Posterior cingulate gyrus (tissue), 11 donors: ENCODE measurements at regions of chr5 and their contacts with region 1.

Region 1: GRCh38 chr5:32232441-32233219 is 58.5 kb upstream of the GOLPH3 start:
- DNase-seq: peak; percentile 65 to 96 (median 86)

Region 2: GRCh38 chr5:31186672-31187267 is 1045.9 kb before region 1 on chr5:
- intact Hi-C with region 1: no loop called
- DNase-seq: no peak

Region 3: DNA sequence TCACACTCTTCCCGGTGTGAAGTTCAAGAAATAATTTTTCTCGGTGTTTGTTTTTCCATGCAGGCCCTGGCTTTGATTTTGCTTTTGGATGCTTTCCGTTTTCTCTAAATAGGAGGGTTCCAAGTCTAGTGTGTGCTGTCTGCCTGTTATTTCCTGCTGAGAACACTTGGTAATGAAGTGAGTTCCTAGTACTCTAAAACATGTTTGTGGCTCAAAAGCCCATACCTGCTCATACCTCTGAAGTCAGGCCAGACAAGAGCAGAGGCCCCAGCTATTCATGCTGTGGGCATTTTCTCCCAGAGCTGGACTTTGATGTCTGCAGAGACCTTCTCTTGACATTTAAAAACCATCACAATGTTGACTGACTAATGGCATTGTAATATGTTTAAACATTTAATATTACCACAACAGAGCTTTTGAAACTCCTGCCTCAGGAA is 269.7 kb before region 1 on chr5:
- intact Hi-C with region 1: no loop called
- DNase-seq: no peak

Region 4: DNA sequence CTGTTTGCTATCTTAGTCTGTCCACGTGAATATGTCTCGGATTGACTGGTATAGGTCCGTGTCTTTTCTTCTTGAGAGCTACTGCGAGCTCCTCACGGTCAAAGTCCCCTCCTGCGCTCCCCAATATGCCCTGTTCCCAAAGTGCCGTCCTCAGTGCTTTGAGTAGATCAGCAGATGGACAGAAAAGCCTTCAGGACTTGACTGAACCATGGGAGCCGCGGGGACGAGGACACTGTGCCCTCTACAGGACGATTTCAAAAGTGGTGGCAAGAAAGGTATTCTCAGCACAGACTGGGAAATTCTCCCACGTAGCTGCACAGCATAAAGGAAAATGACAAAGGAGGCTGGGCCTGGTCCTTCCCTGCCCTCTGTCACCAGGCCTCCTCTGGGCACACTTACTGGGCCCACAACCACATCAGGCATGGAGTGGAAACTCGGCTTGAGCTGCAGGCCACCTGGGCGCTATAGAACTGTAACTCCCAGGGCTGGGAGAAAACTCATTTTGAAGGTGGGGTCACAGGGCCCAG is 96.7 kb after region 1 on chr5:
- intact Hi-C with region 1: loop called (anchors 1 kb)
- DNase-seq: peak; percentile 32 to 95 (median 64)

Region 5: GRCh38 chr5:32406650-32407049 is 174.0 kb after region 1 on chr5:
- intact Hi-C with region 1: no loop called
- DNase-seq: no peak

Region 6: DNA sequence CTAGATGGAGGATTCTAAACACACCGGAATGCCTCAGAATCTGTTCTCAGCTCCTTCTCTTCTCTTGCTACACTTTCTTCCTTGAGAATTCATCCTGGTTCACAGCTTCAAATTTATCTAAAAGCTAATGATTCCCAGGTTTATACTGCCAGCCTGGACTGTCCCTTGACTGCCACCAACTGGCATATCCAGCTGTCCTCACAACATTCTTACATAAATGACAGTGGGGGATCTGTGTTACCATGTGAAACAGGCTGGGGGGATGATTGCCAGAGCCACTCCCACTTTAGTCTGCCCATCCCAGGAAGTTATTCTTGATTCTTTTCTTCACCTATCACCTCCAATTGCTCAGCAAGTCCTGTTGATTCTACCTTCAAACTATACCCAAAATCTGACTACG is 239.2 kb after region 1 on chr5:
- intact Hi-C with region 1: loop called (anchors 5 kb)
- DNase-seq: peak in 2 of 10 donors; percentile 15 to 25

Region 7: DNA sequence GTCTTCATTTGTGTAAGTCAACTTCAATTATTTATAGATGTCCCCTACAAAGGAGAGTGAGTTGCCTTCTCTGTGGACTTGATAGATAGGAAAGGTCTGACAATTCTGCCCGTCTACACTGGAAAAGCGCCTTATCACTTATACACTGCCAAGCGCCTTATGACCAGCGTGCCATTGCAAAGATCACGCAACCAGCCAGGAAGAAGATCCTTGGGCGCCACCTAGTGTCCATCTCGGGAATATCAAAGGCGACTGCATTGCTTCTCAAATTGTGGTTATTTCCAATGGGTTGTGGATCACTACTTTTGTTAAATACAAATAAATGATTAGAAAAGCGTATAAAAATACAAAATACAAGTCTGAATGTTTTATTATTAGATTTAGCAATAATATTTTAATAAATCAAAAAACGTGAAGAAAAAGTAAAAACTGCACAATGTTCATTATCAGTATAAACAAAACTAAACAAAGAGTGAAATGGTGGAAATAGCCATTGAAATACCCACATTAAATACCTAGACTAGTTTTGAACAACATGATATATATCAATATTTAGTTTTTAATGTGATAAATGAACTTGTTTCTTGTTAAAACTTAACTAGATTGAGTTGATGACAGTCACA is 380.5 kb after region 1 on chr5:
- intact Hi-C with region 1: loop called (anchors 2 kb)
- DNase-seq: peak; percentile 71 to 97 (median 89)